ENCODE measurements at regions of chr16 and their contacts with region 1.

Region 1: DNA sequence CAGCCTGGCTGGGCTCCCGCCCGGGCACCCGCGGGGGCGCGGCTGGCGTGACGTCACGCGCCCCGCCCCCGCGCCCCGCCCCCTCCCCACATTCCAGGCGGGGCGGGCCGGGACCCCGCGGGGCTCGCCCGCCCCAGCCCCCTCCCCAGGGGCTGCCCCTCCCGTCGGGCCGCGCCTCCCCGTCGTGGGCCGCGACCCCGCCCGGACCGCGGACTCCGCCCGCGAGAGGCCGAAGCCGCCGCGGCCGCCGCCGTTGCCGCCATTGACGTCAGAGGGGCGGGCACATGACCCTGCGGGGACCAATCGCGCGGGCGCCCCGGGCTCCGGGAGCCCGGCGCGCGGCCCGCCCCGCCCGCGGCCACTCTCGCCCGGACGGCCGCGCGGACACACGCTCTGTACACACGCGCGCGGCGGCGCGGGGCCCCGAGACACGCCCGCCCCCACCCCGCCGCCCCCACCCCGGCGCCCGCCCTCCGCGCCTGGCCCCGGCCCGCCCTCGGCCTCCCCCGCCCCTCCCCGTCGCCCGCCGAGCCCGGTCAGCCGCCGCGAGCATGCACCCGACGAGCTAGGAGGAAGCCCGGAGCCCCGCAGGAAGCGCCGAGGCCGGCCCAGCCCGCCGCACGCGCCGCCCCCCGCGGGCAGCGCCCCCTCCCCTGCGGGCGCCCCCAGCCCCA is at the start of gene CMIP:
- DNase-seq: peak; percentile 82
- H3K4me3 Mint-ChIP-seq: peak within 1 kb of the TSS; percentile 83
- H3K27ac Mint-ChIP-seq: peak within 1 kb of the TSS; percentile 80
- H3K4me1 Mint-ChIP-seq: peaks cover 41% of the 10 kb centered on the region
- H3K27me3 Mint-ChIP-seq: peaks cover 33% of the 10 kb centered on the region
- total RNA-seq, gene CMIP: 57.1 to 58.3 TPM

Region 2: DNA sequence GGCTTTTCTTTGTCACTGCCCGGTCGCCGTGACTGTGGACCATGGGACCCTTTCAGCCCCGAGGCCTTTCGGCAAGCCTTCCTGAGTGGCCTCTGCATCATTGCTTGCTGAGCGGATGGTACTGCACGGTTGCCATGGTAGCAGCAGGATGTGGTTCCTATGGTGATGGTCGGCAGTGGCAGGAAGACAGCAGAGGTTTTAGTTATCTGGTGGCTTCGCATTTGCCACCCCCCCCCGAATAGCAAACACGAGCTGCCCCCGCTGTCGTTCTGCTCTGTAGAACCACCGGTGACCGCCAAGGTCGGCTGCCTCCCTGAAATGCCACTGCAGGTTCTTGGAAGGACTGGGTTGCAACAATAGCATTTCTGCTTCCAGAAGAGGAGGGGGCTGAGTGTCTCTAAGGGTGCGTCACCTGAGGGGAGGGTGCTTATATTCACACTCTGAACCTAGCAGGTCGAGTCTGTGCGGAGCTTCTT is 76.6 kb after region 1 on chr16:
- CTCF ChIA-PET with region 1: interaction called, 3 read pairs
- POLR2A ChIA-PET with region 1: interaction called, 15 read pairs
- DNase-seq: peak; percentile 92
- H3K4me3 Mint-ChIP-seq: peak overlapping the region; percentile 44
- H3K27ac Mint-ChIP-seq: peak overlapping the region; percentile 92
- H3K4me1 Mint-ChIP-seq: peaks cover 70% of the 10 kb centered on the region
- H3K27me3 Mint-ChIP-seq: no peaks in the 10 kb centered on the region

Measured in activated CD4-positive, alpha-beta memory T cell treated with anti-CD3 and anti-CD28 coated beads, Interleukin-2, amount 10 ng/mL, durations not matched to agents 7 days and 5 days (primary cell).